ENCODE measurements at regions of chr19 and their contacts with region 1.

Region 1: DNA sequence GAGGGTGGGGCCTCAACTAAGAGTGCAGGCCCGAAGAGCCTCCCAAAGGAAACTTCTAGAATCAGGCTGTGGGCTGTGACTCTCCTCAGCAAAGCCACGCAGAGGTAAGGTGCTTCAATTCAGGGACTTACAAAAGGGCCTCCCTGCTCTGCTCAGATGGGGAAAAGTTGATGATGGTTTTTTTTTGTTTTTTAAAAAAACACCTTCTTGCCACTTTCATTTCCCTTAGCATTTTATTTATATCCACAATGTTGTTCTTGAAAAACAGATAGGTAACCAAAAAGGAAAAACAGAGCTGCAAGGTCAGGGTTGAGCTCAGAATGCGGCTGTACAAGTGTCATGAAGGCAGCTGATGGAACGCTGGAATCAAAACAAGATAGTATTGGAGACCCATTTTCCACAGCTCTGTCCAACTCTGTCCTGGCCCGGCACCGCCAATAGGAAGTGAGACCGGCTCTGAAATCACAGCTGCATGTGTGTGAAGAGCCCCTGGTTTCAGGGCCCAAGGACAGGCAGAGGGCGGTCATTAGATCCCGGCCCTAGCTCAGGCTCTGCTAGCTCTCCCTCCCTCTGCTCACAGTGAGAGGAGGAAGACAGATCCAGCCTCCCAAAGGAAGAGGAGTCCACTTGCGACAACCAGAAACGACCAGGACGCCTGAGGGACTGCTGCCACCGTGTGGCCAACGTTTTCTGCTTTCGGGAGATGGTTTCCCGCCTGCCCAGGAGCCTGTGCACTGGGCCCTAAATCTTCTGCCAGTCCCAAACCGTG is 58.3 kb downstream of the KLF2 start:
- DNase-seq: peak; percentile 83
- ATAC-seq: peak; percentile 71
- H3K4me3 Mint-ChIP-seq: no peak overlapping the region
- H3K27ac Mint-ChIP-seq: no peak overlapping the region
- H3K4me1 Mint-ChIP-seq: peaks cover 33% of the 10 kb centered on the region
- H3K27me3 Mint-ChIP-seq: no peaks in the 10 kb centered on the region
- CTCF ChIP-seq: peak; percentile 90

Region 2: DNA sequence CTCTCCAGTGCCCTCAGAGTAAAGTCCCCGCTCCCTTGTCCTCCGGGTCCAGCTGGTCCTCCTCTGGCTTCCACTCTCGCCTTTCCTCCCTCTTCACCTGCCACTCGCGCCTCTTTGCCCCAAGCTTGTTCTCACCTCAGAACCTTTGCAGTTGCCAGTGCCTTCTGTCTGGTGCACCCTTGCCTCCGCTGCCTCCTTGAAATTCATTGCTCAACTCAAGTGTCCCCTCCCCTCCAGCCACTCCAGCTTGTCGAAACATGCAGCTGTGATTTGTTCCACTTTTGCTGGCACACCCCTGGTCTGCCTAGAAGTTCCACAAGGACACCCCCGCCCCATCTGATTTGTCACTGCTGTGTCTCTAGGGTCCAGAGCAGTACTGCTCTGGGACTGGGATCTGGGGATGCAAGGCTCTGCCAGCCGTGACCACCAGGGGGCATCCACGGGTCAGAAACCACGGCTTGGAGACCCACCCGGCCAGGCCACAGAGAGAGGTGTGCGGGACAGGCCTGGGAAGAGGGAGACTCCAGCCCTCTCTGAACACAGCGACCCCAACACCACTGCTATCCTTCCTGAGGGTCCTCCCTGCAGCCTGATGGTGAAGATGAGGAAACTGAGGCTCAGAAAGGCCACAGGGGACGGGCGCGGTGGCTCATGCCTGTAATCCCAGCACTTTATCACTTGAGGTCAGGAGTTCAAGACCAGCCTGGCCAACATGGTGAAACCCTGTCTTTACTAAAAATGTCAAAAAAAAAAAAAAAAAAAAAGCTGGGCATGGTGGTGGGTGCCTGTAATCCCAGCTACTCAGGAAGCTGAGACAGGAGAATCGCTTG is 135.4 kb before region 1 on chr19:
- CTCF ChIA-PET with region 1: interaction called, 131 read pairs
- POLR2A ChIA-PET with region 1: no interaction called
- intact Hi-C with region 1: loop called (anchors 2 kb)
- DNase-seq: peak; percentile 88
- ATAC-seq: peak; percentile 93
- H3K4me3 Mint-ChIP-seq: no peak overlapping the region
- H3K27ac Mint-ChIP-seq: no peak overlapping the region
- H3K4me1 Mint-ChIP-seq: peaks cover 15% of the 10 kb centered on the region
- H3K27me3 Mint-ChIP-seq: no peaks in the 10 kb centered on the region
- CTCF ChIP-seq: peak; percentile 93

Region 3: GRCh38 chr19:16280306-16280705 is 102.7 kb before region 1 on chr19:
- CTCF ChIA-PET with region 1: interaction called, 14 read pairs
- POLR2A ChIA-PET with region 1: no interaction called
- intact Hi-C with region 1: no loop called
- DNase-seq: no peak
- ATAC-seq: no peak
- H3K4me3 Mint-ChIP-seq: no peak overlapping the region
- H3K27ac Mint-ChIP-seq: no peak overlapping the region
- H3K4me1 Mint-ChIP-seq: peaks cover 33% of the 10 kb centered on the region
- H3K27me3 Mint-ChIP-seq: peaks cover 9% of the 10 kb centered on the region
- CTCF ChIP-seq: no peak

Region 4: DNA sequence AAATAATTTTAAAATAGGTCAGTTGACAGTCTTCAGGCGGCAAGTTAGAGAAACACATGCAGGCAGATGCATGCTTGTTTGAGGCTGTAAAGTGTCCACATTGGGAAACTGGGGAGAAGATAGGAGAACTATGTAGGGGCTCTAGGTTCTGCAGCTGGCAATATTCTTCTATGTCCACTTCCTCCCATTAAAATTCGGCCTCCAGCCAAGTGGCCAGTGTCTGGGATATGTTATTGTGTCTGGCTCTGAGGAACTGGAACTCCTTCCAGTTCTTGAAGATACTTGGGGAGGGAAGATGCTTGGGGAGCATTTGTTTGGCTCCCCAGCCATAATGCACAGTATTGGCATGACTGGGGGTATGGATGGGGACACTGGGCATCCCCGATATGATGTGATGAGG is 79.2 kb before region 1 on chr19:
- CTCF ChIA-PET with region 1: no interaction called
- POLR2A ChIA-PET with region 1: no interaction called
- intact Hi-C with region 1: no loop called
- DNase-seq: no peak
- ATAC-seq: no peak
- H3K4me3 Mint-ChIP-seq: no peak overlapping the region
- H3K27ac Mint-ChIP-seq: no peak overlapping the region
- H3K4me1 Mint-ChIP-seq: no peaks in the 10 kb centered on the region
- H3K27me3 Mint-ChIP-seq: no peaks in the 10 kb centered on the region
- CTCF ChIP-seq: no peak

Region 5: GRCh38 chr19:16330368-16330801 is 52.6 kb before region 1 on chr19:
- CTCF ChIA-PET with region 1: interaction called, 16 read pairs
- POLR2A ChIA-PET with region 1: no interaction called
- intact Hi-C with region 1: no loop called
- DNase-seq: peak; percentile 98
- ATAC-seq: peak; percentile 92
- H3K4me3 Mint-ChIP-seq: no peak overlapping the region
- H3K27ac Mint-ChIP-seq: peak overlapping the region; percentile 30
- H3K4me1 Mint-ChIP-seq: peaks cover 59% of the 10 kb centered on the region
- H3K27me3 Mint-ChIP-seq: peaks cover 15% of the 10 kb centered on the region
- CTCF ChIP-seq: no peak

Region 6: DNA sequence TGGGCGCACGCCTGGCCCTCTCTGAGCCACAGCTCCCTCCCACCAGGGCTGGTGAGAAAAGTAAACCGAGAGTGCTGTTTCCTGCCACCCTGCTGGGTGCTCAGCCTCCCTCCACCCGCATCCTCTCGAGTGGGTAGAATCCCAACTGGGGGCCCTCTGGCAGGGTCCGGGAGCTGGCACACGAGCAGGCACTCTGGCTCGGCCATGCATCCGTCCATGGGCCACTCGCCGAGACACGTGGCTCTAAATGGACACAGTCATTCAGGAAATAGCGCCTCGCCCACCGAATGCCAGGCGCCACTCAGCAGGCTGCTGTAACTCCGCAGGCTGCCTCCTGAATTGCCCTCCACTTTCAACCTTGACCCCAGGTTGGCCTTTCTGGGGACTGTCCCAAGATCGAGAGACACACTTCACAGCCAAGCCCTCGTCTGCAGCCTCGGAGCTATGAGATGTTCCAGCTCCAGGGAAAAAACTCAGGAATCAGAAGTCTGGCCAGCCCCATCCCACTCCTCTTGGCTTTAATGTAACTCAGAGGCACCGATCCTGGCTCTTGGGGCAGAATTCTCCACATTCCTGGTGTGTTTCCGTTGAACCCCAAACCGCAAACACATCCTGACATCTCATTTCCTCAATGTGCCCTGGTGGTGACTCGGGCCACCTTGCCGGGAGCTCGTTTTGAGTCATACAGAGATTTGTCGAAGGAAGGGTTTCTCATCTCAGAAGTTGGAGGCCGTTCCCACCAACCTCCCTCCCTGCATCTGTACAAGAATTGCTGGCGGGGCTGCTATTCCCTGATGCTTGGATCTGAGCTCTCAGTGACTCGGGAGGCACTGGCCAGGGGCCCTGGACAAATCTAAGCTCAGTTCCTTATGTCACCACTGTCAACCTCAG is 44.2 kb before region 1 on chr19:
- CTCF ChIA-PET with region 1: interaction called, 16 read pairs
- POLR2A ChIA-PET with region 1: interaction called, 3 read pairs
- intact Hi-C with region 1: no loop called
- DNase-seq: peak; percentile 86
- ATAC-seq: peak; percentile 58
- H3K4me3 Mint-ChIP-seq: peak overlapping the region; percentile 40
- H3K27ac Mint-ChIP-seq: peak overlapping the region; percentile 41
- H3K4me1 Mint-ChIP-seq: peaks cover 55% of the 10 kb centered on the region
- H3K27me3 Mint-ChIP-seq: peaks cover 8% of the 10 kb centered on the region
- CTCF ChIP-seq: no peak

Region 7: GRCh38 chr19:16371540-16371986 is 11.4 kb before region 1 on chr19:
- CTCF ChIA-PET with region 1: interaction called, 30 read pairs
- POLR2A ChIA-PET with region 1: interaction called, 9 read pairs
- intact Hi-C with region 1: no loop called
- DNase-seq: peak; percentile 95
- ATAC-seq: peak; percentile 79
- H3K4me3 Mint-ChIP-seq: peak overlapping the region; percentile 3
- H3K27ac Mint-ChIP-seq: peak overlapping the region; percentile 54
- H3K4me1 Mint-ChIP-seq: peaks cover 42% of the 10 kb centered on the region
- H3K27me3 Mint-ChIP-seq: peaks cover 11% of the 10 kb centered on the region
- CTCF ChIP-seq: no peak

Region 8: DNA sequence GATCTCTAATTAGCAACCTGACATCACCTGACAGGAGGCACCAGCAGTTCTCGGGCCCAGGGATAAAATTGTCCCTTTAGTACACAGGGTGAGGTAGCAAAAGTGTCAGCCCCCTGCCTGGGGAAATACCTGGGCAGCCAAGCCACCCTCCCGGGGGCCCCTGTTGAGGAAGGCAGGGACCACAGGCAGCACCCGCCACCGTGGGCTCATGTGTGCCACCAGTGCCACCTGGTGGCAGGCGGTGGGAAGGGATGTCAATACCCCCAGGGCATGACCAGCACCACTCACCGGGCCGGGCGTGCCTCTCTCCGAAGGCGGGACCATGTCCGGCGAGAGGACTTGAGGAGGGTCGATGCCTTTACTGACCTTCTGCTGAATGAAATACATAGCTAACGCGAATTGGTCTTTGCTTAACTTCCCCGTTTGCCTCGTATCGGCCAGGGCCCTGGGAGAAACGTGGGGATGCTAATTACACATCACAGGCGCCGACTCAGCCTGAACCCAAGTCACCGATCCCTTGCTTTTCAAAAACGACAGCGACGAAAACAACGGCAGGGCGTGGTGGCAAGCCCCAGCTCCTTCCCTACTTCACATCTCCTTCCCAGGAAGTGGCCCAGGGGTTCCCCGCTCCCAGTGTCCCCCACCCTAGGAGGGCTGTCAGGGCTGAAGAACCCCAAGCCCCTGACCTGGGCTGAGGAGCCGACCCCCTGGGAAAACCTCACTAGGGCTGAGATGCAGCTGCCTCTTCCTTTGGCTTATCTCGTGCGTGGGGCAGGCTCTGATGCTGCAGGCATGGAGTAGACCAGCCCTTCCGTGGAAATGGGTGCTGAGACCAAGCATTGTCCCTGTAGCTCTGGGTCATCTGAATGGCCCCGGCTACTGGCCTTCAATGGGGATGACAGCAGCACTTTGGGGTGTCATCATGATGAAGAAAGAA is 35.0 kb after region 1 on chr19:
- CTCF ChIA-PET with region 1: interaction called, 10 read pairs
- POLR2A ChIA-PET with region 1: no interaction called
- intact Hi-C with region 1: no loop called
- DNase-seq: peak; percentile 77
- ATAC-seq: peak; percentile 99
- H3K4me3 Mint-ChIP-seq: no peak overlapping the region
- H3K27ac Mint-ChIP-seq: no peak overlapping the region
- H3K4me1 Mint-ChIP-seq: peaks cover 11% of the 10 kb centered on the region
- H3K27me3 Mint-ChIP-seq: no peaks in the 10 kb centered on the region
- CTCF ChIP-seq: peak; percentile 92

Region 9: DNA sequence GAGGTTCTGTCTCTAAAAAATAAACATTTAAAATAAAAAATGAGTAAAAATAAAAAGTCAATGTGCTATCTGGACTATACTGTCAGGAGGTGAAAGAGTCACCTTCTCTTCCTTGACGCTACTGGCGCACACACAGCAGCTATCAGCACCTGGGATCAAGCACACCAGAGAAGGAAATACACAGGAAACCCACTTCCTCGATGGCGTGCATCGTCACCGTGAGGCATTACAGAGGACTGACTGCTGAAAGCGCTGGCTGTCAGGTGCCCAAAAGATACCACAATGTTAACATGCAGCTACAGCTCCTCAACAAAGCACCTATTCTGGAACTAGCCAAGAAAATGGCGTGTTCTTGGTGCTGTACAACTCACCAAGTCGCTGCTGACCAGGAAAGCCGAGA is 183.2 kb after region 1 on chr19:
- CTCF ChIA-PET with region 1: no interaction called
- POLR2A ChIA-PET with region 1: no interaction called
- intact Hi-C with region 1: no loop called
- DNase-seq: peak; percentile 85
- ATAC-seq: peak; percentile 95
- H3K4me3 Mint-ChIP-seq: peak overlapping the region; percentile 18
- H3K27ac Mint-ChIP-seq: peak overlapping the region; percentile 93
- H3K4me1 Mint-ChIP-seq: peaks cover 32% of the 10 kb centered on the region
- H3K27me3 Mint-ChIP-seq: no peaks in the 10 kb centered on the region
- CTCF ChIP-seq: no peak

Measured in activated CD8-positive, alpha-beta T cell treated with anti-CD3 and anti-CD28 coated beads for 36 hours (primary cell).